Dendritic cell treated with granulocyte-macrophage colony-stimulating factor and Interleukin-4, amounts not matched to agents 40 ng/mL and 50 ng/mL, for 4 days (primary cell): ENCODE measurements at regions of chr21 and their contacts with region 1.

Region 1: GRCh38 chr21:41885341-41886029 is 6.3 kb upstream of the PRDM15 start:
- H3K4me3 Mint-ChIP-seq: no peak overlapping the region
- H3K27ac Mint-ChIP-seq: no peak overlapping the region
- H3K4me1 Mint-ChIP-seq: peaks cover 8% of the 10 kb centered on the region
- H3K27me3 Mint-ChIP-seq: peaks cover 4% of the 10 kb centered on the region

Region 2: GRCh38 chr21:41684381-41685245 is 200.9 kb before region 1 on chr21:
- intact Hi-C with region 1: no loop called
- H3K4me3 Mint-ChIP-seq: no peak overlapping the region
- H3K27ac Mint-ChIP-seq: no peak overlapping the region
- H3K4me1 Mint-ChIP-seq: peaks cover 9% of the 10 kb centered on the region
- H3K27me3 Mint-ChIP-seq: peaks cover 21% of the 10 kb centered on the region

Region 3: GRCh38 chr21:41948078-41948895 is 62.8 kb after region 1 on chr21:
- intact Hi-C with region 1: loop called (anchors 10 kb)
- H3K4me3 Mint-ChIP-seq: no peak overlapping the region
- H3K27ac Mint-ChIP-seq: peak overlapping the region; percentile 69
- H3K4me1 Mint-ChIP-seq: peaks cover 79% of the 10 kb centered on the region
- H3K27me3 Mint-ChIP-seq: no peaks in the 10 kb centered on the region